AG04450 (cell line): ENCODE measurements at regions of chrX and their contacts with region 1.

Region 1: GRCh38 chrX:74304016-74304415 is at the start of gene ZCCHC13:
- DNase-seq: no peak
- H3K4me3 ChIP-seq: no peak within 1 kb of the TSS
- H3K27ac ChIP-seq: no peak within 1 kb of the TSS
- H3K27me3 ChIP-seq: no peaks in the 10 kb centered on the region
- CTCF ChIP-seq: no peak
- polyA plus RNA-seq, gene ZCCHC13: not detected in 2 replicates

Region 2: DNA sequence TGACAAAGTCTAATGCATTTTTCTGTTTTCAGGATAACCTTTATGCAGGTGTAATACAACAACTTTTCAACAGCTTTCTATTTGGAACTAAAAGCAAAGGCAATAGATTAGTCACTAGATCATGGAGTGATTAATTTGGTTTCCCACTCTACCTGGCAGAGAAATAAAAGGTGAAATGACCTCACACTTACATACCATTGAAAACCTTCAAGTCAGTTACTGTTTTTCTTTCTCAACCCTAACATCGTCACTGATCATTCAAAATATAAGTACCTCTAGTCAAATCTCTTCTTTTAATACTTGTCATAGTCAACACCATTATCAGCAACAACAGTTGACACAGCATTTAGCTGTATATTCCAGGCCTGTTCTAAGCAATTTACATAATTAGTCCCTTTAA is 85.1 kb before region 1 on chrX:
- CTCF ChIA-PET with region 1: no interaction called
- POLR2A ChIA-PET with region 1: interaction called, 13 read pairs
- DNase-seq: no peak
- H3K4me3 ChIP-seq: no peak overlapping the region
- H3K27ac ChIP-seq: no peak overlapping the region
- H3K27me3 ChIP-seq: no peaks in the 10 kb centered on the region
- CTCF ChIP-seq: no peak

Region 3: GRCh38 chrX:74325130-74326059 is 21.4 kb after region 1 on chrX:
- CTCF ChIA-PET with region 1: no interaction called
- POLR2A ChIA-PET with region 1: no interaction called
- DNase-seq: no peak
- H3K4me3 ChIP-seq: no peak overlapping the region
- H3K27ac ChIP-seq: no peak overlapping the region
- H3K27me3 ChIP-seq: peaks cover under 1% of the 10 kb centered on the region
- CTCF ChIP-seq: no peak

Region 4: DNA sequence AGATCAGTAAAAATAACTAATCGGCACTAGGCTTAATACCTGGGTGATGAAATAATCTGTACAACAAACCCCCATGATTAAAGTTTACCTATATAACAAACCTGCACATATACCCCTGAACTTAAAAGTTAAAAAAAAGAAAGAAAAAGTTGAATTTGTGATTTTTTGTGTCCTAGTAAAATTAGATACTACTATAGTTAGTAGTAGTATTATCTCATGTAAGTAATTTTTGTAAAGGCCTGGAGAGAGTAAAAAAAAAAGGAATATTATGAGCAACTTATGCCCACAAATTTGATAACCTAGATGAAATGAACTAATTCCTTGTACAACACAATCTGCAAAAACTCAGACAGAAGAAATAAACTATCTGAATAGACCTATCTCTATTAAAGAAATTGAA is 91.5 kb after region 1 on chrX:
- CTCF ChIA-PET with region 1: no interaction called
- POLR2A ChIA-PET with region 1: no interaction called
- DNase-seq: no peak
- H3K4me3 ChIP-seq: no peak overlapping the region
- H3K27ac ChIP-seq: no peak overlapping the region
- H3K27me3 ChIP-seq: peaks cover 2% of the 10 kb centered on the region
- CTCF ChIP-seq: no peak